ENCODE measurements at regions of chr19 and their contacts with region 1.

Region 1: GRCh38 chr19:29610563-29611271 is 4.6 kb downstream of the POP4 start:
- DNase-seq: peak; percentile 82 to 90
- ATAC-seq: peak; percentile 83 to 86 (median 86)
- H3K4me3 ChIP-seq: no peak overlapping the region
- H3K27ac ChIP-seq: peak overlapping the region; percentile 71
- H3K4me1 ChIP-seq: peaks cover 16% of the 10 kb centered on the region
- H3K27me3 ChIP-seq: no peaks in the 10 kb centered on the region
- CTCF ChIP-seq: peak; percentile 89

Region 2: DNA sequence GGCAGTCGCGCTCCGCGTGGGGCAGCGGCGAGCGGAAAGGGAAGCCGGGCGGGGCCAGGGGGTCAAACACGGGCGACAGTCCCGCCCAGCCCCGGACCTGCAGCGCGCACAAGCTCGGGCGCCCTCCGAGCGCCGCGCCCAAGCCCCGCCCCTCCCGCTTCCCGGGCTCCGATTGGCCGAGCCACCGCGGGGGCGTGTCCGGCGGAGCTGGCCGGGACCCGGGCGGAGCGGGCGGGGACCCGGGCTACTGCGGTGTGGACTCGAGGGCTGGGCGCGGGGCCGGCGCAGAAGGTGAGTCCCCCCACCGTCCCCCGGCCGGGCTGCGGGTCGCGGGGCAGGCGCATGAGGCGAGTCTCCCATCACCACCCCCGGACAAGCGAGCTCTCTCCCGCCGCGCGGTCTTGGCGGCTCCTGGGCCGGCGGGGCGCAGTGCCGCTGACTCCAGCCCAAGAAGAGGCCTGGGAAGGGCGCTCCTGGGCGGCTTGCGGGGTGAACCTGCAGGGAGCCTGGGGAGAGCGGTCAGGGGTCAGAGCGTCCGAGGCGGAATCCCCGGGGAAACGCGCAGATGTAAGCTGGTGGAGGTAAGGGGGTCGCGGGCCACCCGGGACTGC is 54.6 kb after region 1 on chr19 and contains the start of gene PLEKHF1:
- intact Hi-C with region 1: loop called (anchors 2 kb)
- DNase-seq: peak; percentile 93 to 97
- ATAC-seq: peak; percentile 83 to 91 (median 87)
- H3K4me3 ChIP-seq: peak within 1 kb of the TSS; percentile 75
- H3K27ac ChIP-seq: peak within 1 kb of the TSS; percentile 86
- H3K4me1 ChIP-seq: peaks cover 57% of the 10 kb centered on the region
- H3K27me3 ChIP-seq: no peaks in the 10 kb centered on the region
- CTCF ChIP-seq: no peak
- total RNA-seq, gene PLEKHF1: 5.1 to 119 (median 44.0) TPM

Region 3: GRCh38 chr19:29694669-29695627 is 84.2 kb after region 1 on chr19:
- intact Hi-C with region 1: loop called in 1 of 2 experiments (anchors 1 kb)
- DNase-seq: peak; percentile 92 to 95
- ATAC-seq: peak; percentile 92 to 96 (median 94)
- H3K4me3 ChIP-seq: no peak overlapping the region
- H3K27ac ChIP-seq: peak overlapping the region; percentile 46
- H3K4me1 ChIP-seq: peaks cover 9% of the 10 kb centered on the region
- H3K27me3 ChIP-seq: no peaks in the 10 kb centered on the region
- CTCF ChIP-seq: peak; percentile 91

Region 4: DNA sequence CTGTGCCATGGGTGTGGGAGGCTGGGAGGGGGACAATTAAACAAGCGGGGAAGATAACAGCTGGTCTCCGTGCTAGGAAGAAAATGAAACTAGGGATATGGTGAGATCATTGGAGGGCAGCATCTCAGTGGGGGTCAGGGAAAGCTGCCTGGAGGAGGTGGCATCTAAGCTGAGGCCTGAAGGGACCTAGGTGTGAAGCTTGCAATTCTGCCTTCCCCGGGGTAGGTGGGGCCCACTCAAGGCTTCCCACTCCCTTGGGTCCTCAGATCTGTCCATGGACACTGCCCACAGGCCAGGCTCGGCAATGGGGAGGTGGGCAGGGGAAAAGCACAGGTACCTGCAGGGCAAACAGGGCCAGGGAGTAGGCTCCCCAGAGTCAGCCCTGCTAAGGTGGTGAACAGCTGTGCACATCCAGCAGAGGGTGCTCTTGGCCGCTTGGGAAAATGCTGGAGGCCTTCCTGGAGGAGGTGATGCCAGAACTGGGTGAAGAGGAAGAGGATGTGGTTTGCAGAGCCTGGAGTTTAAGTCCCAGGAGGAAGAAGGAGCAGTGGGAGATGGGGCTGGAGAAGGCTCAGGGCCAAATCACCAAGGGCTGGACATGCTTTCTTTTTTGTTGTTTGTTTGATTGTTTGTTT is 175.4 kb after region 1 on chr19:
- intact Hi-C with region 1: no loop called
- DNase-seq: no peak
- ATAC-seq: no peak
- H3K4me3 ChIP-seq: no peak overlapping the region
- H3K27ac ChIP-seq: no peak overlapping the region
- H3K4me1 ChIP-seq: no peaks in the 10 kb centered on the region
- H3K27me3 ChIP-seq: no peaks in the 10 kb centered on the region
- CTCF ChIP-seq: no peak